Calu3 (cell line): ENCODE measurements at regions of chr6 and their contacts with region 1.

Region 1: GRCh38 chr6:110039364-110039980 is 61.4 kb downstream of the GPR6 start:
- DNase-seq: peak; percentile 90
- H3K4me3 Mint-ChIP-seq: peak overlapping the region; percentile 72
- H3K27ac Mint-ChIP-seq: peak overlapping the region; percentile 90
- H3K4me1 Mint-ChIP-seq: peaks cover 14% of the 10 kb centered on the region
- H3K27me3 Mint-ChIP-seq: no peaks in the 10 kb centered on the region
- CTCF ChIP-seq: peak; percentile 80

Region 2: DNA sequence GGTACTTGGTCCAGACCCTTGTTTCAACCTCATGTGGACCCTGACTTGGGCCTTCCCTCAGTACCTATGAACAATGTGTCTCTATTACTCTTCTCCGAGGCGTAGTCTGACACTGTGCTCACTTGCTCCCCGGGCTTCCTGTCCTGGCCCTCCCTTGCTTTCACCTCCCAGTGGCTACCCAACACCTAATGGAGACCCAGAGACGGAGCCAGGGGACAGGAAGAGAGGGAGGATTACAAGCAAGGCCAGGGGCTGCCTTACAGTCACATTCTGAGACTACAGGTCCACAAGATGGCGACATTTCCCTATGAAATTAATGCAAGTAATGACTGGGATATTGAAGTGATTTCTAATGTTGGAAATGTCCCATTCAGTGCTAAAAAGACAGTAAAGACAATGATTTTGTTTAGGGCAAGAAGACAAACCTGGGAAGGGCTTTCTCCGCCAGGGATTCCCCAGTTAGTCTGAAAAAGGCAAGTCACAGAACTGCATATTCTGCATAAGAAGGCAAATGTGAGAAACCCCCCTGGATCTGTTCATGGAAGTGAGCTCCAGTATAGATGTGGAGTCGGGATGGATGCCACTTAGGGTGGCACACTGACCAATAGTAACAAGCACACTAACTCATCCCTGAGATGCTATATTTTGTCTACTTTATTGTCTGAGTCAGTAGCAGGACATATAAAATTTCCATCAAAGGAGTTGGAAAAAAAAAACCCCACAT is 512.4 kb before region 1 on chr6:
- CTCF ChIA-PET with region 1: interaction called, 13 read pairs
- intact Hi-C with region 1: loop called (anchors 1 kb)
- DNase-seq: peak; percentile 66
- H3K4me3 Mint-ChIP-seq: no peak overlapping the region
- H3K27ac Mint-ChIP-seq: no peak overlapping the region
- H3K4me1 Mint-ChIP-seq: peaks cover 7% of the 10 kb centered on the region
- H3K27me3 Mint-ChIP-seq: no peaks in the 10 kb centered on the region
- CTCF ChIP-seq: peak; percentile 55

Region 3: GRCh38 chr6:109705258-109705657 is 334.2 kb before region 1 on chr6:
- CTCF ChIA-PET with region 1: interaction called, 104 read pairs
- intact Hi-C with region 1: loop called (anchors 1 kb)
- DNase-seq: peak; percentile 85
- H3K4me3 Mint-ChIP-seq: no peak overlapping the region
- H3K27ac Mint-ChIP-seq: no peak overlapping the region
- H3K4me1 Mint-ChIP-seq: peaks cover 17% of the 10 kb centered on the region
- H3K27me3 Mint-ChIP-seq: no peaks in the 10 kb centered on the region
- CTCF ChIP-seq: peak; percentile 85

Region 4: GRCh38 chr6:109892436-109893435 is 146.7 kb before region 1 on chr6:
- CTCF ChIA-PET with region 1: interaction called, 123 read pairs
- intact Hi-C with region 1: loop called (anchors 1 kb)
- DNase-seq: peak; percentile 86
- H3K4me3 Mint-ChIP-seq: peak overlapping the region; percentile 46
- H3K27ac Mint-ChIP-seq: peak overlapping the region; percentile 97
- H3K4me1 Mint-ChIP-seq: peaks cover 44% of the 10 kb centered on the region
- H3K27me3 Mint-ChIP-seq: no peaks in the 10 kb centered on the region
- CTCF ChIP-seq: peak; percentile 20

Region 5: DNA sequence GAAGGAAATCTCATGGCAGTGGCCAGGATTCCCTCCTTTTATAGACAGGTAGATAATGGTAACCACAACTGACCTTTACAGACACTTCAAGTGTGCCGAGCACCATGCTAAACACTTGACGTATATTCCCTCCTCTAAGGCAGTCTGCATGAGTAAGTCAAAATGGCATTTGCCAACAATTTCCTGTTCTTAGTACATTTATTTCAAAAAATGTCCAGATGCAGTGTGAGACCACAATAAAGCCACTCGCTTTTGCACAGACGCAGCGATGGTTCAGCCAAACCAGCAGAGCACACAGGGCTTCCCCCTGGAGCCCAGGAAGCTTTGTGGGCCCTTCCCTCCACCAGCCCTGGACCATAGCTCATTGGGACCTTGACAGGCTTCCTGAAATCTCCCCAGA is 77.8 kb before region 1 on chr6:
- CTCF ChIA-PET with region 1: interaction called, 15 read pairs
- intact Hi-C with region 1: loop called (anchors 10 kb)
- DNase-seq: peak; percentile 39
- H3K4me3 Mint-ChIP-seq: peak overlapping the region; percentile 28
- H3K27ac Mint-ChIP-seq: peak overlapping the region; percentile 16
- H3K4me1 Mint-ChIP-seq: peaks cover 25% of the 10 kb centered on the region
- H3K27me3 Mint-ChIP-seq: no peaks in the 10 kb centered on the region
- CTCF ChIP-seq: no peak

Region 6: GRCh38 chr6:110101885-110102284 is 62.4 kb after region 1 on chr6:
- CTCF ChIA-PET with region 1: no interaction called
- intact Hi-C with region 1: no loop called
- DNase-seq: no peak
- H3K4me3 Mint-ChIP-seq: no peak overlapping the region
- H3K27ac Mint-ChIP-seq: no peak overlapping the region
- H3K4me1 Mint-ChIP-seq: peaks cover 6% of the 10 kb centered on the region
- H3K27me3 Mint-ChIP-seq: no peaks in the 10 kb centered on the region
- CTCF ChIP-seq: no peak